CD4-positive, alpha-beta memory T cell (primary cell): ENCODE measurements at regions of chr7 and their contacts with region 1.

Region 1: GRCh38 chr7:45435846-45436245 is 138.3 kb upstream of the ADCY1 start:
- DNase-seq: no peak
- H3K4me3 ChIP-seq: no peak overlapping the region
- H3K4me3 Mint-ChIP-seq: no peak overlapping the region
- H3K27ac ChIP-seq: no peak overlapping the region
- H3K27ac Mint-ChIP-seq: no peak overlapping the region
- H3K4me1 ChIP-seq: no peaks in the 10 kb centered on the region
- H3K4me1 Mint-ChIP-seq: no peaks in the 10 kb centered on the region
- H3K27me3 ChIP-seq: no peaks in the 10 kb centered on the region
- H3K27me3 Mint-ChIP-seq: peaks cover 18 to 24% of the 10 kb centered on the region in 2 donors

Region 2: GRCh38 chr7:45446195-45446944 is 10.5 kb after region 1 on chr7:
- CTCF ChIA-PET with region 1: no interaction called
- POLR2A ChIA-PET with region 1: no interaction called
- intact Hi-C with region 1: loop called (anchors 1 kb)
- DNase-seq: no peak
- H3K4me3 ChIP-seq: no peak overlapping the region
- H3K4me3 Mint-ChIP-seq: no peak overlapping the region
- H3K27ac ChIP-seq: no peak overlapping the region
- H3K27ac Mint-ChIP-seq: no peak overlapping the region
- H3K4me1 ChIP-seq: no peaks in the 10 kb centered on the region
- H3K4me1 Mint-ChIP-seq: no peaks in the 10 kb centered on the region
- H3K27me3 ChIP-seq: no peaks in the 10 kb centered on the region
- H3K27me3 Mint-ChIP-seq: peaks cover 3 to 6% of the 10 kb centered on the region in 2 donors